ENCODE measurements at regions of chr17 and their contacts with region 1.

Region 1: GRCh38 chr17:82153745-82154375 is 55.8 kb upstream of the FASN start:
- DNase-seq: peak; percentile 90
- H3K4me3 ChIP-seq: no peak overlapping the region
- H3K27ac ChIP-seq: no peak overlapping the region
- H3K4me1 ChIP-seq: no peaks in the 10 kb centered on the region
- H3K27me3 ChIP-seq: no peaks in the 10 kb centered on the region
- CTCF ChIP-seq: peak; percentile 88 to 92 (median 90)
- EP300 ChIP-seq: no peak
- POLR2A ChIP-seq: no peak

Region 2: GRCh38 chr17:81959362-81960129 is 194.3 kb before region 1 on chr17:
- intact Hi-C with region 1: loop called (anchors 2 kb)
- DNase-seq: peak; percentile 84
- H3K4me3 ChIP-seq: peak overlapping the region in 3 of 4 donors; percentile 22 to 50 (median 44)
- H3K27ac ChIP-seq: no peak overlapping the region
- H3K4me1 ChIP-seq: peaks cover 0 to 28% (median 23%) of the 10 kb centered on the region in 4 donors
- H3K27me3 ChIP-seq: peaks cover 38 to 83% (median 63%) of the 10 kb centered on the region in 3 donors
- CTCF ChIP-seq: peak in 1 of 4 experiments; percentile 78
- EP300 ChIP-seq: no peak
- POLR2A ChIP-seq: no peak

Region 3: GRCh38 chr17:82030470-82031302 is 123.2 kb before region 1 on chr17:
- intact Hi-C with region 1: loop called (anchors 1 kb)
- DNase-seq: peak; percentile 93
- H3K4me3 ChIP-seq: peak overlapping the region; percentile 23 to 58 (median 42)
- H3K27ac ChIP-seq: peak overlapping the region; percentile 18 to 61 (median 59)
- H3K4me1 ChIP-seq: peaks cover 0 to 25% (median 23%) of the 10 kb centered on the region in 4 donors
- H3K27me3 ChIP-seq: peaks cover 6 to 21% (median 18%) of the 10 kb centered on the region in 3 donors
- CTCF ChIP-seq: peak; percentile 91 to 96 (median 94)
- EP300 ChIP-seq: no peak
- POLR2A ChIP-seq: no peak

Region 4: GRCh38 chr17:82103553-82104451 is 50.1 kb before region 1 on chr17:
- intact Hi-C with region 1: loop called (anchors 5 kb)
- DNase-seq: peak; percentile 91
- H3K4me3 ChIP-seq: no peak overlapping the region
- H3K27ac ChIP-seq: peak overlapping the region; percentile 66 to 91 (median 83)
- H3K4me1 ChIP-seq: peaks cover 0 to 57% (median 49%) of the 10 kb centered on the region in 4 donors
- H3K27me3 ChIP-seq: no peaks in the 10 kb centered on the region
- CTCF ChIP-seq: no peak
- EP300 ChIP-seq: peak in 1 of 4 donors; percentile 41
- POLR2A ChIP-seq: no peak